ENCODE measurements at regions of chr9 and their contacts with region 1.

Region 1: GRCh38 chr9:99184475-99185347 is 37.0 kb downstream of the ALG2 start:
- DNase-seq: peak; percentile 76 to 91 (median 88)
- ATAC-seq: peak; percentile 93 to 99 (median 97)
- H3K4me3 ChIP-seq: peak overlapping the region in 2 of 4 donors; percentile 22 to 29
- H3K27ac ChIP-seq: no peak overlapping the region
- H3K4me1 ChIP-seq: peaks cover 0 to 4% (median 0%) of the 10 kb centered on the region in 3 donors
- H3K27me3 ChIP-seq: no peaks in the 10 kb centered on the region
- CTCF ChIP-seq: peak; percentile 85 to 94 (median 93)

Region 2: GRCh38 chr9:100058699-100059579 is 874.2 kb after region 1 on chr9:
- intact Hi-C with region 1: no loop called
- DNase-seq: no peak
- ATAC-seq: no peak
- H3K4me3 ChIP-seq: no peak overlapping the region
- H3K27ac ChIP-seq: no peak overlapping the region
- H3K4me1 ChIP-seq: peaks cover 14 to 17% (median 14%) of the 10 kb centered on the region in 3 donors
- H3K27me3 ChIP-seq: no peaks in the 10 kb centered on the region
- CTCF ChIP-seq: no peak

Region 3: GRCh38 chr9:100598641-100599145 is 1414.0 kb after region 1 on chr9:
- intact Hi-C with region 1: loop called in 1 of 3 experiments (anchors 10 kb)
- DNase-seq: peak; percentile 84 to 95 (median 88)
- ATAC-seq: peak; percentile 87 to 93 (median 91)
- H3K4me3 ChIP-seq: peak overlapping the region; percentile 7 to 49 (median 28)
- H3K27ac ChIP-seq: peak overlapping the region in 3 of 4 donors; percentile 47 to 54 (median 50)
- H3K4me1 ChIP-seq: no peaks in the 10 kb centered on the region
- H3K27me3 ChIP-seq: no peaks in the 10 kb centered on the region
- CTCF ChIP-seq: no peak